Activated CD4-positive, alpha-beta T cell treated with anti-CD3 and anti-CD28 coated beads for 36 hours (primary cell): ENCODE measurements at regions of chr7 and their contacts with region 1.

Region 1: GRCh38 chr7:94449148-94449725 is 54.5 kb downstream of the COL1A2 start:
- DNase-seq: no peak
- ATAC-seq: peak; percentile 39
- H3K4me3 Mint-ChIP-seq: no peak overlapping the region
- H3K27ac Mint-ChIP-seq: no peak overlapping the region
- H3K4me1 Mint-ChIP-seq: no peaks in the 10 kb centered on the region
- H3K27me3 Mint-ChIP-seq: peaks cover 7% of the 10 kb centered on the region

Region 2: GRCh38 chr7:93773446-93773845 is 675.8 kb before region 1 on chr7:
- CTCF ChIA-PET with region 1: no interaction called
- POLR2A ChIA-PET with region 1: no interaction called
- intact Hi-C with region 1: no loop called
- DNase-seq: no peak
- ATAC-seq: no peak
- H3K4me3 Mint-ChIP-seq: no peak overlapping the region
- H3K27ac Mint-ChIP-seq: no peak overlapping the region
- H3K4me1 Mint-ChIP-seq: no peaks in the 10 kb centered on the region
- H3K27me3 Mint-ChIP-seq: no peaks in the 10 kb centered on the region

Region 3: DNA sequence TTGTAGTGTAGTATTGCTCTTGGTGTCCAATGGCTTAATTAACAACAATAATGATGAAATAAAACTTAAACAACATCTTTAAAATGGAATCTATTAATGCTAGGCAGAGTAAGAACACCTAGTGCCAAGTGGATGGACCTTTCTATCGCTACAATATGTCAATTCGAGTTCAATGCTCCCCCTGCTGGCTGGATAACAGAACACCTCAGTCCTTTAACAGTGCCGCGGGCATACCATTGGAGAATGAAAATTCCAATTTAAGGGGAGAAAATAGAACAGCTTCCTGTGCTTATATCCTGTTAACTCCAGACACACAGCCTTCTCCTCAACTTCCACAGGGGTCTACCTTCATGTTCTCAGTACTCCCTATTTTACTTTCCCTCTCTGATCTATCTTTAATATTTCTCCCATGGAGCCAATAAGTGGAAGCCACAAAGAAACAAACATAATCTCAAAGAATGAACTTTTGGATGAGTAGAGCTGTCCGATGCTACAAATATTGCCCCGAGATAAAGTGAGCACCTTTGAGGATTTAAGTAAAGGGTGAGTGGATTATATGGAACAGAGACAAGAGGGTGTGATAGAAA is 13.1 kb before region 1 on chr7:
- CTCF ChIA-PET with region 1: interaction called, 22 read pairs
- POLR2A ChIA-PET with region 1: no interaction called
- intact Hi-C with region 1: no loop called
- DNase-seq: peak; percentile 70
- ATAC-seq: peak; percentile 42
- H3K4me3 Mint-ChIP-seq: no peak overlapping the region
- H3K27ac Mint-ChIP-seq: no peak overlapping the region
- H3K4me1 Mint-ChIP-seq: no peaks in the 10 kb centered on the region
- H3K27me3 Mint-ChIP-seq: peaks cover 18% of the 10 kb centered on the region

Region 4: GRCh38 chr7:94567396-94567795 is 118.2 kb after region 1 on chr7:
- CTCF ChIA-PET with region 1: no interaction called
- POLR2A ChIA-PET with region 1: no interaction called
- intact Hi-C with region 1: no loop called
- DNase-seq: no peak
- ATAC-seq: no peak
- H3K4me3 Mint-ChIP-seq: no peak overlapping the region
- H3K27ac Mint-ChIP-seq: no peak overlapping the region
- H3K4me1 Mint-ChIP-seq: no peaks in the 10 kb centered on the region
- H3K27me3 Mint-ChIP-seq: no peaks in the 10 kb centered on the region

Region 5: GRCh38 chr7:94657771-94658693 is 208.8 kb after region 1 on chr7:
- CTCF ChIA-PET with region 1: interaction called, 13 read pairs
- POLR2A ChIA-PET with region 1: no interaction called
- intact Hi-C with region 1: loop called (anchors 2 kb)
- DNase-seq: peak; percentile 96
- ATAC-seq: peak; percentile 89
- H3K4me3 Mint-ChIP-seq: peak overlapping the region; percentile 67
- H3K27ac Mint-ChIP-seq: no peak overlapping the region
- H3K4me1 Mint-ChIP-seq: peaks cover 20% of the 10 kb centered on the region
- H3K27me3 Mint-ChIP-seq: peaks cover 20% of the 10 kb centered on the region

Region 6: GRCh38 chr7:95199779-95200558 is 750.7 kb after region 1 on chr7:
- CTCF ChIA-PET with region 1: no interaction called
- POLR2A ChIA-PET with region 1: no interaction called
- intact Hi-C with region 1: loop called in 1 of 2 experiments (anchors 5 kb)
- DNase-seq: peak; percentile 6
- ATAC-seq: no peak
- H3K4me3 Mint-ChIP-seq: no peak overlapping the region
- H3K27ac Mint-ChIP-seq: no peak overlapping the region
- H3K4me1 Mint-ChIP-seq: no peaks in the 10 kb centered on the region
- H3K27me3 Mint-ChIP-seq: peaks cover 6% of the 10 kb centered on the region

Region 7: DNA sequence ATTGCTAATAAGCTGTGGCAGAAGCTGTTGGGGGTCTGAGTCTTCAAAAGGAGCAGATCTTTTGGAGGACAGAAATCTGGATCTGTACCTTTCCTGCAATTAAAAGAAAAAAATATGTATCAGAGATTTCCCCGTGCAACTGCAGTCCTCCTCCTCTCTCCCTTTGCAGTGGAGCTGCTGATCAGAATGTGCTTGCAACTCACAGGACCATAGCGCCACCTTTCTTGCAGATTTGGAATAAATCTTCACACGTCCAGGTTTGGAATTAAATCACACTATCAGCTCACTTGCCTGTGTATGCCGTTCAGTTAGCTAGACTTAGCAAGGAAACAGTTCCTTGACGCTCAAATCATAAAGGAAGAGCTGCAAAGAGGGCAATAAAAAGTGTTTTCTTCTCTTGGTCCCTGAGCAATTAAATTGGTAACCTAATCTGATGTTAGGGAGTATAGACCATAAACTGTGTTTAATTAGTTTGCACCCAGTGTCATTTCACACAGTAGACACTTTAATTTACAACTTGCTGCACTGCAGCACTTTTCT is 797.7 kb after region 1 on chr7:
- CTCF ChIA-PET with region 1: interaction called, 14 read pairs
- POLR2A ChIA-PET with region 1: no interaction called
- intact Hi-C with region 1: loop called (anchors 1 to 10 kb)
- DNase-seq: peak; percentile 50
- ATAC-seq: peak; percentile 58
- H3K4me3 Mint-ChIP-seq: no peak overlapping the region
- H3K27ac Mint-ChIP-seq: no peak overlapping the region
- H3K4me1 Mint-ChIP-seq: no peaks in the 10 kb centered on the region
- H3K27me3 Mint-ChIP-seq: peaks cover 7% of the 10 kb centered on the region

Region 8: GRCh38 chr7:95690367-95690947 is 1241.2 kb after region 1 on chr7:
- CTCF ChIA-PET with region 1: no interaction called
- POLR2A ChIA-PET with region 1: no interaction called
- intact Hi-C with region 1: loop called in 1 of 2 experiments (anchors 5 kb)
- DNase-seq: peak; percentile 6
- ATAC-seq: peak; percentile 63
- H3K4me3 Mint-ChIP-seq: no peak overlapping the region
- H3K27ac Mint-ChIP-seq: no peak overlapping the region
- H3K4me1 Mint-ChIP-seq: peaks cover 3% of the 10 kb centered on the region
- H3K27me3 Mint-ChIP-seq: peaks cover 6% of the 10 kb centered on the region